ENCODE measurements at regions of chr12 and their contacts with region 1.

Region 1: DNA sequence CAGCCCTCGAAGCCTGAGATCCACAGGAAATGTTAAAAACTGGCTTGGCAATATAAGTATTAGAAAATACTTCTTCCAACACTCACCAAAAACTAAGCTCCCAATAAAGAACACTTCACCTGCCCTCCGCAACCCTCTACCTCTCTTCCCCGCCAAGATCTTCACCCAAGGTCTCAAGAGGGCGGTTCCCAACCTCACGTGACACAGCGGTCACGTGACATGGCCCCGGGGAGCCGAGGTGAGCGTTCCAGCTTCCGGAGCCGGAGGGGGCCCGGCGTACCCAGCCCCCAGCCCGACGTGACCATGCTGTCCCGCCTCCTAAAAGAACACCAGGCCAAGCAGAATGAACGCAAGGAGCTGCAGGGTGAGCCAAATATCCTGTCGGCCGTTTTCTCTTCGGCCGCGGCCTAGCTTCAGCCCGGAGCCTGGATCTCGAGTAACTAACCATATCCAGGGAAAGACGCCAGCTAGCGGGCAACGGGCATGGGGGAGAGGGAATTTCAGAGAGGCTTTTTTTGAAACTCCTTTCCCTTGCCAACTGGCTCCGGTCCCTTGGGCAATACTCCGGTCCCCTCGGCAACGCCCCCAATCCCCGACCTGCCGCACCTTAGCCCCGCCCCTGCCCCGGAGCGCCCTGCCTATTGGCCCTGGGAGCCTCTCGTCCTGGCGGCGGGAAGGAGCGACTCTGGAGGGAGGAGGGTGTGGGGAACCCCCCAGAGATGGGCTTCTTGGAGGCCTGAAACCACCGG is at the start of gene BLOC1S1:
- DNase-seq: peak; percentile 93 to 95
- H3K4me3 ChIP-seq: peak within 1 kb of the TSS; percentile 55
- H3K4me3 Mint-ChIP-seq: peak within 1 kb of the TSS; percentile 69
- H3K27ac Mint-ChIP-seq: peak within 1 kb of the TSS; percentile 80
- H3K4me1 ChIP-seq: peaks cover 36% of the 10 kb centered on the region
- H3K4me1 Mint-ChIP-seq: no peaks in the 10 kb centered on the region
- H3K27me3 ChIP-seq: no peaks in the 10 kb centered on the region
- H3K27me3 Mint-ChIP-seq: peaks cover 7% of the 10 kb centered on the region
- CTCF ChIP-seq: no peak
- total RNA-seq, gene BLOC1S1: 59.4 and 73.7 TPM in 2 replicates

Region 2: GRCh38 chr12:55448825-55449224 is 267.2 kb before region 1 on chr12:
- CTCF ChIA-PET with region 1: no interaction called
- POLR2A ChIA-PET with region 1: no interaction called
- intact Hi-C with region 1: no loop called
- DNase-seq: no peak
- H3K4me3 ChIP-seq: no peak overlapping the region
- H3K4me3 Mint-ChIP-seq: no peak overlapping the region
- H3K27ac Mint-ChIP-seq: no peak overlapping the region
- H3K4me1 ChIP-seq: no peaks in the 10 kb centered on the region
- H3K4me1 Mint-ChIP-seq: peaks cover 8% of the 10 kb centered on the region
- H3K27me3 ChIP-seq: no peaks in the 10 kb centered on the region
- H3K27me3 Mint-ChIP-seq: no peaks in the 10 kb centered on the region
- CTCF ChIP-seq: no peak

Region 3: GRCh38 chr12:55515696-55516095 is 200.3 kb before region 1 on chr12:
- CTCF ChIA-PET with region 1: no interaction called
- POLR2A ChIA-PET with region 1: no interaction called
- intact Hi-C with region 1: no loop called
- DNase-seq: peak in 1 of 2 experiments; percentile 15
- H3K4me3 ChIP-seq: no peak overlapping the region
- H3K4me3 Mint-ChIP-seq: no peak overlapping the region
- H3K27ac Mint-ChIP-seq: no peak overlapping the region
- H3K4me1 ChIP-seq: no peaks in the 10 kb centered on the region
- H3K4me1 Mint-ChIP-seq: no peaks in the 10 kb centered on the region
- H3K27me3 ChIP-seq: no peaks in the 10 kb centered on the region
- H3K27me3 Mint-ChIP-seq: no peaks in the 10 kb centered on the region
- CTCF ChIP-seq: no peak

Region 4: DNA sequence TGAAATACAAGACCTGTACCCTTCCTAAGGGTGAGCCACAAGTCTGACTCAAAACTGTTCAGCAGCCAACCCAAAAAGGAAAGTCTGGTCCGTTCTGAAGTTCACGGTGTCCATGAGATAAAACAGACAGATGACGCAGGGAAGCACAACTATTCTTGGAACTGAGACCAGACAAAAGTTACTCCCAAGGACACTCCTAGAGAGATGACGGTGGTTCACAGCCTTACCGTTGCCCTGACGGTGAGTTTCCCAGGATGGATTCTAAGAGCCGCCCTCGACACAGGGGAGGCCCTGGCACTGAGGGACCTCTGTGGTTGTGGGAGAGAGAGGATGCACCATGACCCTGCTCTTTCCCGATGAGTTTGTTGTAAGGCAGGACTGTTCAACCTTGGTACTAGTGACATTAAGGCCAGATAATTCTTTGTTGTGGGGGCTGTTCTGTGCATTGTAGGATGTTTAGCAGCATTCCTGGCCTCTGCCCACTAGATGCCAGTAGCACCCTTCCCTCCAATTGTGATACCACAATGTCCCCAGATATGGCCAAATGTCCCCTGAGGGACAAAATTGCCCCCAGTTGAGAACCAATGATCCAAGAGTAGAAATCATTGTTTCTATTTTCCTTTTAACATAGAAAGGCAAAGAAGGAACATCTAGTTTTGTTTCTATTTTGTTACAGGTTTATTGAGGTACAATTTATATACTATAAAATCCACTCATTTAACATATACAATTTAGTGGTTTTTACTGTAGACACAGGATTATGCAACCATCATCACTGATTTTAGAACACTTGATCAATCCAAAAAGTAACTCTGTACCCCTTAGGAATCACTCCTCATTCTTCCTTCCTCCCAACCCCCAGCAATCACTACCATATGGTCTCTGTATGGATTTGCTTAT is 56.3 kb before region 1 on chr12:
- CTCF ChIA-PET with region 1: interaction called, 6 read pairs
- POLR2A ChIA-PET with region 1: no interaction called
- intact Hi-C with region 1: loop called (anchors 2 kb)
- DNase-seq: peak in 1 of 2 experiments; percentile 29
- H3K4me3 ChIP-seq: no peak overlapping the region
- H3K4me3 Mint-ChIP-seq: no peak overlapping the region
- H3K27ac Mint-ChIP-seq: no peak overlapping the region
- H3K4me1 ChIP-seq: no peaks in the 10 kb centered on the region
- H3K4me1 Mint-ChIP-seq: no peaks in the 10 kb centered on the region
- H3K27me3 ChIP-seq: no peaks in the 10 kb centered on the region
- H3K27me3 Mint-ChIP-seq: no peaks in the 10 kb centered on the region
- CTCF ChIP-seq: peak; percentile 26 to 43

Region 5: DNA sequence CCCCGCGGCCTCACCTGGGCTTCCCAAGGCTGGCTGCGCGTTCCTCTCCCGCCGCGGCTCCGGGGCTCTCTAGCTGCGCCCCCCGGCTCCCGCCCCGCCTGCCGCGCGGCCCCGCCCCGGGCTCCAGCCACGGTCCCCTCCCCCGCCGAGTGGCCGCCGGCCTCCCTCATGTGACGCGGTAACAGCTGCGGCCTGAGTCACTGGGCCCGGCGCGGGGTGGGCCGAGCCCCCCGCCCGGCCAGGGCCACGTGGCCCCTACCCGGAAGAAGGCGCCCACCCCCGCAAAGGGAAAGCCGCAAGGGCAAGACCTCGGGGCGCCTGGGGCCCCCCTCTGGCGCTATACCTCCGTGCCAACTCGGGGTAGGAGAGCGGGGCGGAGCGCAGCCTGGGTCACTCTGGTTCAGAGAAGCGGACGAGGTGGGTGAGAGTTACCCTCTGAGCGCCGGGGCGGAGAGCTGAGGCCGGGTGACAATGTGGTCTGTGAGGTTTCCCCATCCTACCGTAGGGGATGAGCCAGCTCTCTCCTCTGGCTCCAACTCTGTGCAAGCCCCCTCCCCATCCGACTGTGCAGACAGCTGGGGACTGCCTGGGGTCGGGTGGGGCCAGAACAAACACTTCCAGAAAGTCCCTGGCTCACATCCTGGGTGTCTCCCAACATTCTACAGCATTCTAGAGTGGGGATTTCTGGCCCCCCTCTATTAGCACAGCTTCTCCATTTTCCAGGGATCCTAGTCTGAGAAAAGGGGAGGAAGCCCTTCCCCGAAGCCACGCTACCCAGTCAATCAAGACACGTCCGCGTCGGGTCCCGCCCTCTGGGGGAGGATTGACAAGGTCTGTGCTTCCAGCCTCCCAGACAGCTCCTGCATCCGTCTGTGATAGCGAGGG is 13.2 kb after region 1 on chr12 and contains the start of gene CD63:
- CTCF ChIA-PET with region 1: interaction called, 12 read pairs
- POLR2A ChIA-PET with region 1: interaction called, 14 read pairs
- intact Hi-C with region 1: no loop called
- DNase-seq: peak; percentile 84 to 86
- H3K4me3 ChIP-seq: peak within 1 kb of the TSS; percentile 90
- H3K4me3 Mint-ChIP-seq: peak within 1 kb of the TSS; percentile 90
- H3K27ac Mint-ChIP-seq: peak within 1 kb of the TSS; percentile 93
- H3K4me1 ChIP-seq: peaks cover 16% of the 10 kb centered on the region
- H3K4me1 Mint-ChIP-seq: peaks cover 14% of the 10 kb centered on the region
- H3K27me3 ChIP-seq: no peaks in the 10 kb centered on the region
- H3K27me3 Mint-ChIP-seq: no peaks in the 10 kb centered on the region
- CTCF ChIP-seq: no peak
- total RNA-seq, gene CD63: 947 and 983 TPM in 2 replicates

Measured in Caco-2 (cell line).